ENCODE measurements at regions of chr4 and their contacts with region 1.

Region 1: GRCh38 chr4:72295966-72296557 is 264.3 kb downstream of the NPFFR2 start:
- DNase-seq: peak; percentile 78
- H3K4me3 ChIP-seq: no peak overlapping the region
- H3K27ac ChIP-seq: no peak overlapping the region
- H3K4me1 ChIP-seq: no peaks in the 10 kb centered on the region
- H3K27me3 ChIP-seq: no peaks in the 10 kb centered on the region

Region 2: DNA sequence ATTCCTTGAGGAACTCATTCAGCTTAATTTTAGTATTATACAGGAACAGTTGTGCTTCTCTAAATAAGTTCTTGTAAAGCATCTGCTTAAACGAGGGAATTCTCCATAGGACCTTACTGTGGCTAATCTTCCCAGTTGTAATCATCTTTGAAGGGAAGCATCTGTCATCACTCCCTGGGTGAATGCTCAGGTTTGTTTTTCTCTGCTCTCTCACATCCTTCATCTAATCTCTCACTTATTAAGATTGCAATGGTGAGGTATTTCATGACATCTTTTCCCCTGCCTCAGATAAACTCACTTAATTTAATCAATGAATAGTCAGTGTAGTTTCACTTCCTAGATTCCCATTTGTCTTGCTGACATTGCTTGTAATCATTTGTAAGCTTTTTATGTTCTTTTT is 394.7 kb after region 1 on chr4:
- in situ Hi-C with region 1: loop called (anchors 25 kb)
- DNase-seq: no peak
- H3K4me3 ChIP-seq: no peak overlapping the region
- H3K27ac ChIP-seq: no peak overlapping the region
- H3K4me1 ChIP-seq: no peaks in the 10 kb centered on the region
- H3K27me3 ChIP-seq: no peaks in the 10 kb centered on the region